HepG2 (cell line): ENCODE measurements at regions of chr10 and their contacts with region 1.

Region 1: GRCh38 chr10:89207181-89207800 is at the start of gene CH25H:
- DNase-seq: no peak
- ATAC-seq: peak; percentile 76
- H3K4me3 ChIP-seq: peak within 1 kb of the TSS; percentile 39 to 62 (median 42)
- H3K27ac ChIP-seq: no peak within 1 kb of the TSS
- H3K4me1 ChIP-seq: peaks cover 22% of the 10 kb centered on the region
- H3K27me3 ChIP-seq: peaks cover 17 to 56% of the 10 kb centered on the region in 2 experiments
- CTCF ChIP-seq: no peak
- EP300 ChIP-seq: no peak
- POLR2A ChIP-seq: no peak
- RAD21 ChIP-seq: no peak
- total RNA-seq, gene CH25H: not detected in 2 replicates

Region 2: GRCh38 chr10:89029785-89030437 is 177.4 kb before region 1 on chr10:
- CTCF ChIA-PET with region 1: interaction called, 17 read pairs
- POLR2A ChIA-PET with region 1: no interaction called
- in situ Hi-C with region 1: loop called (anchors 5 kb)
- intact Hi-C with region 1: no loop called
- DNase-seq: peak; percentile 53
- ATAC-seq: peak; percentile 79
- H3K4me3 ChIP-seq: no peak overlapping the region
- H3K27ac ChIP-seq: no peak overlapping the region
- H3K4me1 ChIP-seq: no peaks in the 10 kb centered on the region
- H3K27me3 ChIP-seq: no peaks in the 10 kb centered on the region
- CTCF ChIP-seq: peak; percentile 86
- EP300 ChIP-seq: no peak
- POLR2A ChIP-seq: no peak
- RAD21 ChIP-seq: peak; percentile 31; the same call in 1 of the 2 replicates